Mammary epithelial cell (primary cell): ENCODE measurements at regions of chr11 and their contacts with region 1.

Region 1: GRCh38 chr11:67544616-67545242 is 21.5 kb upstream of the CABP2 start:
- DNase-seq: no peak
- H3K4me3 ChIP-seq: no peak overlapping the region
- H3K27ac ChIP-seq: no peak overlapping the region
- H3K4me1 ChIP-seq: no peaks in the 10 kb centered on the region
- H3K27me3 ChIP-seq: no peaks in the 10 kb centered on the region
- CTCF ChIP-seq: no peak

Region 2: GRCh38 chr11:67592880-67593564 is 48.3 kb after region 1 on chr11:
- CTCF ChIA-PET with region 1: no interaction called
- dilution Hi-C with region 1: loop called (anchors 5 kb)
- in situ Hi-C with region 1: no loop called
- intact Hi-C with region 1: no loop called
- DNase-seq: peak; percentile 17
- H3K4me3 ChIP-seq: no peak overlapping the region
- H3K27ac ChIP-seq: no peak overlapping the region
- H3K4me1 ChIP-seq: peaks cover 14% of the 10 kb centered on the region
- H3K27me3 ChIP-seq: no peaks in the 10 kb centered on the region
- CTCF ChIP-seq: no peak